Activated CD4-positive, alpha-beta memory T cell treated with anti-CD3 and anti-CD28 coated beads for 36 hours (primary cell): ENCODE measurements at regions of chr13 and their contacts with region 1.

Region 1: DNA sequence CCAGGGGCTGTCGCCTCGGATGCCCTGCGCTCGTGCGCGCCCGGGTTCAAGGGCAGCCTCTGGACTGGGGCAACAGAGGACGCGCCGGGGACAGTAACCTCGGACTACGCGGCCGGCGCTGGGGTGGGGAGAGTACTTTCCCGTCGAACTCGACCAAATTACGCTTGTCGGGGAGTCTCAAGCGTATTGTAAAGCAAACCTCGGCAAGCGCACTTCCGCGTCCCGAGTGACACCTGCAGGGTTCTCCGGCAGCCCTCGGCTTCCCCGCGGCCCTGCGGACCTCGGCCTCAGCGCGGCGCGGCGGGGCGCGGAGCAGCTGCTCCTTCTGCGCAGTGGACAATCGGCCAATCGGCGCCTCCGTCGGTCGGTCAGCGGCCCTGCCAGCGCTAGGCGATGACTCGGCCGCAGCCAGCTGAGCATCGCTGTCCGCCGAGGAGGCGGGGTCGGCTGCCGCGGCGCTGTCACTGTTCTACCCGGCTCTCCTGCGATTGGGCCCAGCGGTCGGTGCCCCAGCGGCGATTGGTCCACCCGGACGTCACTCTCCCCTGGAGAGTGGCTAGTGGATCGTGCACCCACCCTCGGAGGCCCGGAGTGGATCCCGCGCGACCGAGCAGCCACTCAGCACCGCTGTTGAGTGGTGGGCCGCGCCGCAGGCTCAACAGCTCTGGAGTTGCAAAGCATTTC is at the start of gene SLC46A3:
- DNase-seq: peak; percentile 98
- H3K4me3 Mint-ChIP-seq: peak within 1 kb of the TSS; percentile 87
- H3K27ac Mint-ChIP-seq: peak within 1 kb of the TSS; percentile 76
- H3K4me1 Mint-ChIP-seq: peaks cover 30% of the 10 kb centered on the region
- H3K27me3 Mint-ChIP-seq: no peaks in the 10 kb centered on the region
- total RNA-seq, gene SLC46A3: 3.4 to 3.8 TPM

Region 2: GRCh38 chr13:27449936-27450828 is 1268.5 kb before region 1 on chr13 and contains the start of gene MTIF3:
- CTCF ChIA-PET with region 1: no interaction called
- POLR2A ChIA-PET with region 1: no interaction called
- intact Hi-C with region 1: loop called (anchors 2 kb)
- DNase-seq: peak; percentile 97
- H3K4me3 Mint-ChIP-seq: peak within 1 kb of the TSS; percentile 90
- H3K27ac Mint-ChIP-seq: peak within 1 kb of the TSS; percentile 95
- H3K4me1 Mint-ChIP-seq: peaks cover 57% of the 10 kb centered on the region
- H3K27me3 Mint-ChIP-seq: no peaks in the 10 kb centered on the region
- total RNA-seq, gene MTIF3: 35.7 to 37.3 TPM

Region 3: GRCh38 chr13:28679628-28680027 is 39.1 kb before region 1 on chr13:
- CTCF ChIA-PET with region 1: no interaction called
- POLR2A ChIA-PET with region 1: no interaction called
- intact Hi-C with region 1: loop called (anchors 2 kb)
- DNase-seq: no peak
- H3K4me3 Mint-ChIP-seq: no peak overlapping the region
- H3K27ac Mint-ChIP-seq: no peak overlapping the region
- H3K4me1 Mint-ChIP-seq: no peaks in the 10 kb centered on the region
- H3K27me3 Mint-ChIP-seq: no peaks in the 10 kb centered on the region

Region 4: DNA sequence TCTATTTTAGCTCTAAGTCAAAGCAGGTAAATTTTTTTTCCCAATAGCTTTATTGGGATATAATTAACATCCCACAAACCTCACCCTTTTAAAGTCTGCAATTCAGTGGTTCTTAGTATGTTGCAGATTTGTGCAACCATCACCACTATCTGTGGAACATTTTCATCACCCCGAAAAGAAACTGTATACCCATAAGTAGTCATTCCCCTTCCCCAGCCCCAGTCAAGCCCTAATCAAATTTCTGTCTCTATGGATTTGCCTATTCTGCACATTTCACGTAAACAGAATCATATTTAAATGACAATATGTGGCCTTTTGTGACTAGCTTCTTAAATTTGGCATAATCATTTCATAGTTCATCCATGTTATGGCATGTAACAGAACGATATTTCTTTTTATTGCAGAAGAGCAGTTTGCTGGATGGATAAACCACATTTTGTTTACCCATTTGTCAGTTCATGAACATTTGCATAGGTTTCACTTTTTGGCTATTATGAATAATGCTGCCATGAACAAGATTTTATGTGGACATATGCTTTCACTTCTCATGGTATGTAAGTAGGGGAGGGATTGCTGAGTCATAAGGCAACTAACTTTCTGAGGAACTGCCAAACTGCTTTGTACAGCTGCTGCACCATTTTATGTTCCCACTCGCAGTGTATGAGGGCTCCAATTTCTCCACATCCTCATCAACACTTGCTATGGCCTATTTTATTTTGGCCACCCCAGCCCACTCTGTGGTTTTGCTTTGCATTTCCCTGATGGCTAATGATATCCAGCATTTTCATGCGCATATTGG is 10.9 kb before region 1 on chr13:
- CTCF ChIA-PET with region 1: no interaction called
- POLR2A ChIA-PET with region 1: interaction called, 4 read pairs
- intact Hi-C with region 1: loop called (anchors 1 kb)
- DNase-seq: peak; percentile 20
- H3K4me3 Mint-ChIP-seq: no peak overlapping the region
- H3K27ac Mint-ChIP-seq: peak overlapping the region; percentile 33
- H3K4me1 Mint-ChIP-seq: peaks cover 9% of the 10 kb centered on the region
- H3K27me3 Mint-ChIP-seq: no peaks in the 10 kb centered on the region

Region 5: GRCh38 chr13:28796938-28797257 is 78.2 kb after region 1 on chr13:
- CTCF ChIA-PET with region 1: interaction called, 10 read pairs
- POLR2A ChIA-PET with region 1: no interaction called
- intact Hi-C with region 1: no loop called
- DNase-seq: no peak
- H3K4me3 Mint-ChIP-seq: no peak overlapping the region
- H3K27ac Mint-ChIP-seq: no peak overlapping the region
- H3K4me1 Mint-ChIP-seq: no peaks in the 10 kb centered on the region
- H3K27me3 Mint-ChIP-seq: peaks cover 8% of the 10 kb centered on the region